ENCODE measurements at regions of chr3 and their contacts with region 1.

Region 1: DNA sequence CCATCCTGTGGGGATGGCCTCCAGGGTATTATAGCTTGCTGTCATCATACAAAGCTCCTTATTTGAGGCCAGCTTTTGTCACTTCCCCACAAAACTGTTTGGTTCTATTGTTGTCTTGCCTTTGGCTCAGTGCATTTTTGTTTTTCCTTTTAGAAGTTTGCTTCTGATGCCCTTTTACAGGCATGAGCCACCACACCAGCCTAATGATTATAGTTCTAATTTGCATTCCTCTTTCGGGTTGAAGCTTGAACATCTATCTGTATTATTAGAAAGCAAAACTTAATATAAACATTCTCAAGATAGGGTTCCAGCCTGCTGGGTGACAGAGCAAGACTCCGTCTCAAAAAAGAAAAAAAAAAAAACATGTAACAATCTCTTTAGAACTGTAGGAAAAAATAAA is 39.8 kb downstream of the SMARCC1 start:
- DNase-seq: no peak
- H3K4me3 ChIP-seq: no peak overlapping the region
- CTCF ChIP-seq: no peak
- POLR2A ChIP-seq: no peak

Region 2: GRCh38 chr3:47802734-47803477 is 61.0 kb after region 1 on chr3 and contains the start of gene DHX30:
- intact Hi-C with region 1: no loop called
- DNase-seq: peak; percentile 76 to 96
- H3K4me3 ChIP-seq: peak within 1 kb of the TSS; percentile 84
- CTCF ChIP-seq: no peak
- POLR2A ChIP-seq: no peak
- total RNA-seq, gene DHX30: 59.0 to 81.0 (median 66.7) TPM

Region 3: DNA sequence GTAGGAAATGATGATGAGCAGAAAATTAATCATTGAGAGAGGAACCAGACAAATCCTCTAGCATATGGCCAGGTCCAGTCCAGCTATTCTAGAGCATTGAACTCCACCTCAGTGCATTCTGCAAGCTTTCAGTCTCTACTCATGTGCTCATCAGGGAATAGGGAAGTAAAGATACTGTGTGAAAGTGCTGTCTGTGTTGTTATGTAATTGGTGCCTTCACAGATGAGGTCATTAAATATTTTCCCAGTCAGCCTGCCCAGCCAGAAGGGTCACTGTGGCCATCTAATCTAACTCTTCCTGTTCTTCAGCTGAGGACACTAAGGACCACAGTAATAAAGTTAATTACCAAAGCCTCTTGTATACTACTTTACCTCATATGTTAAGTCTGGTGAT is 1506.9 kb after region 1 on chr3:
- intact Hi-C with region 1: loop called (anchors 5 kb)
- DNase-seq: peak in 1 of 2 donors; percentile 24
- H3K4me3 ChIP-seq: no peak overlapping the region
- CTCF ChIP-seq: no peak
- POLR2A ChIP-seq: no peak

Measured in lower leg skin (tissue), 4 donors.